AG04449 (cell line): ENCODE measurements at regions of chr10 and their contacts with region 1.

Region 1: DNA sequence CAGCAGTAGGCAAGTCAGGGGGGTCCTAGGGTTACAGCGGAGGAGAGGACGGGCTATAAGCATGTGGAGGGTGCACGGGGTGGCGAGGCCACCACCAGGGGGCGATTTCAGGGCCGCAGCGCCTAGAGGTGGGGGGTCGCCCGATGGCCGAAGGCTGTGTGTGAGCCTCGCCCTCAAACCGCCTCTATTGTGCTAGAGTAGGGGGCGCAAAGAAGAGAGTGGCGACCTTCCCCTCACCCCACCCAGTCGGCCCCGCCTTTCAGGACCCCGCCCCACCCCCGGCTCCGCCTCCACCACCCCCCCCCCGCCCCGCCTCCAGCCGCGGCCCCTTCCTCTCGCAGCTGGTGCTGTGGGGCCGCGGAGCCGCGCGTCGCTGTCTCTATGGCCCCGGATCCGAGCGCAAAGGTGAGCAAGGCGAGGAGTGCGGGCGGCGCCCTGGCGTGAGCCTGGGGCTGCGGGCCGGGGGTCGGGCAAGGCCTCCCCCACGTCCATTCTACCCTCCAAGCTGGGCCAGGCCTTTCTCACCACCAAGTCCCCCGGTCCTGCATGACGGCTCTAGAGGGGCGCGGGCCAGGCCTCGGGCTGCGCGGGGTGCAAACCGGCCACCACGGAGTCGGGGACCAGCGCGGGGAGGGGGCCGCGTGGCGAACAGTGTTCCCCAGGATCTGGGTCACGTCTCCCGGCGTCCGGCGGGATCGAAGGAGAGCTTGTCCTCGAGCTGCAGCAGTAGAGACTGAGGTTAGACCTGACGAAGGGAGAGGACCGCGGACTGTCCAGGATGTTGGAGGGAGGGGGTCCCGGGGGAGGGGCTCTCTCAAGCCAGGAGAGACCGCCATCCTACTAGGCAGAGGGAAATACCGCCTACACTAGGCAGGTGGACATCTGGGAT is at the start of gene SEMA4G:
- DNase-seq: no peak
- H3K4me3 ChIP-seq: peak within 1 kb of the TSS; percentile 67
- CTCF ChIP-seq: peak; percentile 92

Region 2: DNA sequence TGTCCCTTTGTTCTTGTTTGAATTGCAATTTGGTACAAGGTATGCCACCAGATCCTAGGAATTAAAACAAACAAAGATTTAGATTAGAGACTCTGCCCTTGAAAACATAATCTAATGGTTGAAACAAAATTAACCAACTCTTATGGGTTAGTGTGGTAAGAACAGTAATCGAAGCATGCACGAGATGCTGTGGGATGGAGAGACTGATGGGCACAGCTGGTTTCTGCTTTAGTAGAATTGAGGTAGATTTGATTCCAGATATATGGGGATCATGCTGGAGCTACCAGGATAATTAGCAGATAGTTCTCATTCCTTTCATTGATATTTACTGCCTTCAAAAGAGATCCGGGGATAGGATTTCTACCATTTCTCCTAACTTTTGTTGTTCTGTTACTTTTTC is 20.5 kb before region 1 on chr10:
- CTCF ChIA-PET with region 1: interaction called, 34 read pairs
- POLR2A ChIA-PET with region 1: no interaction called
- DNase-seq: no peak
- H3K4me3 ChIP-seq: no peak overlapping the region
- CTCF ChIP-seq: no peak

Region 3: DNA sequence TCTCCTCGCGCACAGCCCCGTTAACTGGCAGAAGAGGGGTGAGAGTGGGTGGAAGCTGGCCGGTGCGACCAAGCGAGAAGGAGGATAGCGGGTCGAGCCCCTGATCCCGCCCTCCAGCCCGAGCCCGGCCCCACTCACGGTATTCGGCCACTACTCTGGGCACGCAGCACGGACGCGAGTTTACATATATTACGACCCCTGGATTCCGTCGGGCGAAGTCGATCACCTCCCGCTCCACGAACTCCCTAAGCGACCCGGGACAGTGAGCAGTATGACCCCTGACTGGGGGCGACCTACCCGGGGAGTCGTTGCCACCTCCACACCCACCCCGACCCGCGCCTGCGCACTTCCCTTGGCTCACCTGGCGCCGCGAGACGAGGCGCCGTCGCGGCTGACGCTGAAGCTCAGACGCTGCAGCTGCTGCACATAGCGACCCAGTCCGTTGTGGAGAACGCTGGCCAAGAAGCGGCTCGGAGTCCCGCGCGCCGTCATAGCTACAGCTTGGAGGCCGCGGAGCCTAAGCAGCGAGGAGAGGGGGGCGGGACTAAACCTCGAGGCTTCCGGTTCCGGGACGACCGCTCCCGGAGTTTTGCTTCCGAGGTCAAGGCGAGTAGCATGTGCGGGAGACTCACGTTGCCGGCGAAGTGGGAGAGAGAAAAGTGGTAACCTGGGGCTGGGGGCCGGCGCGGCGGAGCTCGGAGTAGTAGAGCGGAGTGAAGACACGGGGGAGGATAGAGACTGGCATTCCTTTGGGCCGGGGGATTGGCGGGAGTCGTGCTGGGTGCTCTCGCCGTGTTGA is 17.7 kb after region 1 on chr10 and contains the starts of genes MRPL43 and TWNK:
- CTCF ChIA-PET with region 1: interaction called, 15 read pairs
- POLR2A ChIA-PET with region 1: no interaction called
- DNase-seq: no peak
- H3K4me3 ChIP-seq: peak within 1 kb of the TSS; percentile 100
- CTCF ChIP-seq: no peak

Region 4: GRCh38 chr10:101012525-101013364 is 43.3 kb after region 1 on chr10:
- CTCF ChIA-PET with region 1: interaction called, 49 read pairs
- POLR2A ChIA-PET with region 1: interaction called, 4 read pairs
- DNase-seq: no peak
- H3K4me3 ChIP-seq: no peak overlapping the region
- CTCF ChIP-seq: peak; percentile 94